Sigmoid colon (tissue), 7 donors: ENCODE measurements at regions of chr6 and their contacts with region 1.

Region 1: GRCh38 chr6:63764318-63764916 is 128.8 kb downstream of the PHF3 start:
- DNase-seq: no peak
- H3K4me3 ChIP-seq: no peak overlapping the region
- H3K27ac ChIP-seq: no peak overlapping the region
- H3K4me1 ChIP-seq: no peaks in the 10 kb centered on the region
- H3K27me3 ChIP-seq: no peaks in the 10 kb centered on the region
- CTCF ChIP-seq: peak in 2 of 4 experiments; percentile 40 to 71
- EP300 ChIP-seq: no peak
- POLR2A ChIP-seq: no peak

Region 2: DNA sequence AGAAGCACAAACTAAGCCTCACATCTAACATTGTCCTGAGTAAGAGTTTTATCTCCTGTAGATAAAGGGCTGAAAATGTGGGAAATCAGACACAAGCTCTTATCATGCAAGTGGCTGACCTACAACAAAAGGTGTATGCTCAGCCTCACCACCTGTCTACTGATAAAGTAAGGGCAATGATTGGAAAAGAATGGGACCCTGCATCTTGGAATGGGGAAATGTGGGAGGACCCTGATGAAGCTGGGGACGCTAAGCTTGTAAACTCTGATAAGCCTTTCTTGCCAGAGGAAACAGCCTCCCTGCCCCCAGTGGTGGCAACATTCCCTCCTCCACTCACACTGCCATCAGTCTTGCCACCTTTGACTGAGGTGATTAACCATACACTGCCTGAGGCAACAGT is 1645.0 kb before region 1 on chr6:
- intact Hi-C with region 1: no loop called
- DNase-seq: no peak
- H3K4me3 ChIP-seq: no peak overlapping the region
- H3K27ac ChIP-seq: no peak overlapping the region
- H3K4me1 ChIP-seq: no peaks in the 10 kb centered on the region
- H3K27me3 ChIP-seq: no peaks in the 10 kb centered on the region
- CTCF ChIP-seq: no peak
- EP300 ChIP-seq: no peak
- POLR2A ChIP-seq: no peak

Region 3: GRCh38 chr6:63352587-63353285 is 411.7 kb before region 1 on chr6:
- intact Hi-C with region 1: loop called (anchors 2 kb)
- DNase-seq: no peak
- H3K4me3 ChIP-seq: no peak overlapping the region
- H3K27ac ChIP-seq: no peak overlapping the region
- H3K4me1 ChIP-seq: peaks cover 0 to 4% (median 0%) of the 10 kb centered on the region in 4 donors
- H3K27me3 ChIP-seq: no peaks in the 10 kb centered on the region
- CTCF ChIP-seq: peak; percentile 25 to 61 (median 31)
- EP300 ChIP-seq: no peak
- POLR2A ChIP-seq: no peak

Region 4: DNA sequence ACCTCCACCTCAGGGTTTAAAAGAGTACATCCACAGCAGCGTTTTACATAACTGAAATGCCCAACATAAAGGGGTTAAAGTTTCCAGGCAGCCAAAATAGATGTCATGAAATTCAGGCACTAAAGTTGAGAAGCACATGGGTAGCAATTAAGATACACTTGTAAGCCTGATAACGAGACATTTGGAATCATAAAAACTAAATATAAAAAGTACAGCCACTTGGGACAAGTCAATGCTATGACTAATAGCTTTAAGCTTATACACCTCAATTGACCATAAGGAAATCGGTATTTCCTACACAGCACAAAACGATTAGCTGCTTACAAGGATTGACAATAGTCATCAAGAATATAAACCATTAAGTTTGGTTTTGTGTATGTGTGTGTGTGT is 180.3 kb before region 1 on chr6:
- intact Hi-C with region 1: loop called (anchors 5 kb)
- DNase-seq: no peak
- H3K4me3 ChIP-seq: no peak overlapping the region
- H3K27ac ChIP-seq: no peak overlapping the region
- H3K4me1 ChIP-seq: no peaks in the 10 kb centered on the region
- H3K27me3 ChIP-seq: no peaks in the 10 kb centered on the region
- CTCF ChIP-seq: no peak
- EP300 ChIP-seq: no peak
- POLR2A ChIP-seq: no peak

Region 5: GRCh38 chr6:63598049-63599036 is 166.1 kb before region 1 on chr6:
- intact Hi-C with region 1: loop called (anchors 1 kb)
- DNase-seq: peak; percentile 80
- H3K4me3 ChIP-seq: peak overlapping the region; percentile 27 to 47 (median 40)
- H3K27ac ChIP-seq: peak overlapping the region in 1 of 4 donors; percentile 10
- H3K4me1 ChIP-seq: peaks cover 0 to 7% (median 5%) of the 10 kb centered on the region in 4 donors
- H3K27me3 ChIP-seq: no peaks in the 10 kb centered on the region
- CTCF ChIP-seq: peak; percentile 82 to 88 (median 84)
- EP300 ChIP-seq: no peak
- POLR2A ChIP-seq: no peak

Region 6: GRCh38 chr6:63615590-63615989 is 148.8 kb before region 1 on chr6:
- intact Hi-C with region 1: no loop called
- DNase-seq: no peak
- H3K4me3 ChIP-seq: no peak overlapping the region
- H3K27ac ChIP-seq: no peak overlapping the region
- H3K4me1 ChIP-seq: no peaks in the 10 kb centered on the region
- H3K27me3 ChIP-seq: no peaks in the 10 kb centered on the region
- CTCF ChIP-seq: no peak
- EP300 ChIP-seq: no peak
- POLR2A ChIP-seq: no peak

Region 7: DNA sequence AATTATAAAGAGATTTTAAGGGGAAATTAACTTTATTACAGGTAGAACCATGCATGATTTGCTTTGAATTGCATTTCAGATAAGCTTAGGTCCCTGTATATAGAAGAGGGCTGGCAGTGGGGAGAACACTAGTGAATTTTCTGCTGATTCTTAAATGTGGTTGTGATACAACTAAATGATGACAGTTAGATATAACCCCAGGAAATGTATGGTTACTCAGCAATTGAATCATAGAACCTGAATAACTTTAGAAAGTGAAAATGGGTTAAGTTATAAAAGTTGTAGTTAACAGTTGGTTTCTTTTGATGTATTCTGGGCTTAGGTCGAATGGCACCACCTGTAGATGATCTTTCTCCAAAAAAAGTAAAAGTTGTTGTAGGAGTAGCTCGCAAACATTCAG is 58.7 kb before region 1 on chr6:
- intact Hi-C with region 1: no loop called
- DNase-seq: no peak
- H3K4me3 ChIP-seq: no peak overlapping the region
- H3K27ac ChIP-seq: no peak overlapping the region
- H3K4me1 ChIP-seq: no peaks in the 10 kb centered on the region
- H3K27me3 ChIP-seq: no peaks in the 10 kb centered on the region
- CTCF ChIP-seq: no peak
- EP300 ChIP-seq: no peak
- POLR2A ChIP-seq: no peak